IMR-90 (cell line): ENCODE measurements at regions of chr11 and their contacts with region 1.

Region 1: GRCh38 chr11:117226388-117227385 is 5.2 kb downstream of the PCSK7 start:
- DNase-seq: peak; percentile 78
- ATAC-seq: peak; percentile 79
- H3K4me3 ChIP-seq: no peak overlapping the region
- H3K27ac ChIP-seq: no peak overlapping the region
- H3K4me1 ChIP-seq: peaks cover 9% of the 10 kb centered on the region
- H3K27me3 ChIP-seq: no peaks in the 10 kb centered on the region
- CTCF ChIP-seq: peak; percentile 84
- POLR2A ChIP-seq: no peak
- RAD21 ChIP-seq: peak; percentile 87

Region 2: DNA sequence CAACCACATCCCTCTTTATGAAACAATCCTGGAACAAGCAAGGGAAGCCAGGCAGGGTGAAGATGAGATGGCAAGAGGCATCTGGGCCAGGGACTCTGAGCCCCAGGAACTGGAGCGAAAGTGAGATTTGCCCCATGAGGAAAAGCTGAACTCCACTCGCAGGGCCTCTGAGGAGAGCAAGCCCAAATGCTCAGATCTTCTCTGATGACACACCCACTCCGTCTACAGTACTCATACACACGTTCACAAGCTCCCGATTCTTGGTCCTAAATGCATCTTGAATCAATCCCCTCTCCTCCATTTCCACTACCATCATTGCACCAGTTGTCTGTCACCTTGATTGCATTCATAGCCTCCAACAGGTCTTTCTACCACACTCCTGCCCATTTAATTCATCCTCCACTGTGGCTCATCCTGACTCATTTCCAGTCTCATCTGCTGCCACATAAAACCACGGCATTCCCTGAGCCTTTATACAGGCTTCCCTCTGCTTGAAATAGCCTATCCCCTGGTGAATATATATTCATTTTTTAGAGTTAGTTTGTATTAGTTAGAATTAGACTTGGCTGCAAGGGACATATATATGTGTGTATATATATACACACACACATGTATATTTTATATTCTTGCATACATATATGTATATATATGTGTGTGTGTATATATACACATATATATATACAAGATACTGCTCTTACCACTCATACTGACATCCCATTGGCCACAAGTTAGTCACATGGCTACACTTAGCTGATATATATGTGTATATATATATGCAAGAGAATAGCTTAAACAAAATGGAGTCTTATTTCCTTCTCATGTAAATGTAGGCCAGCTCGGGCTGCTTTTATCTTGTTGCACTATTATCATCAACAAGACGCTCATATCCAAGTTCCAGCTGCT is 433.6 kb before region 1 on chr11:
- CTCF ChIA-PET with region 1: interaction called, 3 read pairs
- POLR2A ChIA-PET with region 1: no interaction called
- dilution Hi-C with region 1: no loop called
- in situ Hi-C with region 1: loop called (anchors 5 kb)
- intact Hi-C with region 1: loop called (anchors 1 kb)
- DNase-seq: peak; percentile 73
- ATAC-seq: peak; percentile 21; the same call in 1 of the 2 replicates
- H3K4me3 ChIP-seq: no peak overlapping the region
- H3K27ac ChIP-seq: no peak overlapping the region
- H3K4me1 ChIP-seq: peaks cover 4% of the 10 kb centered on the region
- H3K27me3 ChIP-seq: no peaks in the 10 kb centered on the region
- CTCF ChIP-seq: no peak
- POLR2A ChIP-seq: no peak
- RAD21 ChIP-seq: no peak

Region 3: DNA sequence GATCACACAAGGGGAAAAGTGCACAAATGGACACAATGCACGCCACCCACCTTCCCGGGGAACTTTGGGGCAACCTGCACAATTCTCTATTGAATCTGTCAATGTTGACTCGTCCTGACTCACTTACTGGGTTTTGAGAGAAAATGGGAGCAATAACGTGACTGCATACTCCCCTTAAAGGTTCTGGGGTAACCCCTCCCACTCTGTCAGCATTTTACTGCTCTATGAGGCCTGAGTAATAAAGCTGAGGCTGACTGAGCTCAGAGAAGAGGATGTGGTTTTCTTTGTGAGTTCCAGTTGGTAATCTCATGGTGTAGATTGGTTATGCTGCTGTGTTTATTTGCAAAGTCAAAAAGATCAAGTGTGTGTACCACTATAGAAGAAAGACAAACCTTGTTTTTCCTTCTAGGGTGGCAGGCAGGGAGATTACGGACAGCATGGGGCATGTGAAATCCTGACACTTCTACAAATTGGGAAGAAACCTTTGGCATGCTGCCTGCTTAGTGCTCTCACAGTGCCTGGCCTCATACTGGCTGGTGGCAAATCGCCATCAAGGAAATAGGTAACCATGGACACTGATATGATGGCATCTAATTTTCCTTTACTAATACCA is 373.1 kb before region 1 on chr11:
- CTCF ChIA-PET with region 1: no interaction called
- POLR2A ChIA-PET with region 1: no interaction called
- dilution Hi-C with region 1: no loop called
- in situ Hi-C with region 1: no loop called
- intact Hi-C with region 1: loop called (anchors 10 kb)
- DNase-seq: peak; percentile 96
- ATAC-seq: peak; percentile 87
- H3K4me3 ChIP-seq: no peak overlapping the region
- H3K27ac ChIP-seq: peak overlapping the region; percentile 41
- H3K4me1 ChIP-seq: peaks cover 23% of the 10 kb centered on the region
- H3K27me3 ChIP-seq: no peaks in the 10 kb centered on the region
- CTCF ChIP-seq: no peak
- POLR2A ChIP-seq: no peak
- RAD21 ChIP-seq: no peak

Region 4: GRCh38 chr11:116879800-116880625 is 346.7 kb before region 1 on chr11:
- CTCF ChIA-PET with region 1: no interaction called
- POLR2A ChIA-PET with region 1: no interaction called
- dilution Hi-C with region 1: no loop called
- in situ Hi-C with region 1: loop called (anchors 10 kb)
- intact Hi-C with region 1: no loop called
- DNase-seq: peak; percentile 85
- ATAC-seq: peak; percentile 93
- H3K4me3 ChIP-seq: no peak overlapping the region
- H3K27ac ChIP-seq: no peak overlapping the region
- H3K4me1 ChIP-seq: peaks cover 7% of the 10 kb centered on the region
- H3K27me3 ChIP-seq: no peaks in the 10 kb centered on the region
- CTCF ChIP-seq: peak; percentile 79
- POLR2A ChIP-seq: no peak
- RAD21 ChIP-seq: peak; percentile 89

Region 5: DNA sequence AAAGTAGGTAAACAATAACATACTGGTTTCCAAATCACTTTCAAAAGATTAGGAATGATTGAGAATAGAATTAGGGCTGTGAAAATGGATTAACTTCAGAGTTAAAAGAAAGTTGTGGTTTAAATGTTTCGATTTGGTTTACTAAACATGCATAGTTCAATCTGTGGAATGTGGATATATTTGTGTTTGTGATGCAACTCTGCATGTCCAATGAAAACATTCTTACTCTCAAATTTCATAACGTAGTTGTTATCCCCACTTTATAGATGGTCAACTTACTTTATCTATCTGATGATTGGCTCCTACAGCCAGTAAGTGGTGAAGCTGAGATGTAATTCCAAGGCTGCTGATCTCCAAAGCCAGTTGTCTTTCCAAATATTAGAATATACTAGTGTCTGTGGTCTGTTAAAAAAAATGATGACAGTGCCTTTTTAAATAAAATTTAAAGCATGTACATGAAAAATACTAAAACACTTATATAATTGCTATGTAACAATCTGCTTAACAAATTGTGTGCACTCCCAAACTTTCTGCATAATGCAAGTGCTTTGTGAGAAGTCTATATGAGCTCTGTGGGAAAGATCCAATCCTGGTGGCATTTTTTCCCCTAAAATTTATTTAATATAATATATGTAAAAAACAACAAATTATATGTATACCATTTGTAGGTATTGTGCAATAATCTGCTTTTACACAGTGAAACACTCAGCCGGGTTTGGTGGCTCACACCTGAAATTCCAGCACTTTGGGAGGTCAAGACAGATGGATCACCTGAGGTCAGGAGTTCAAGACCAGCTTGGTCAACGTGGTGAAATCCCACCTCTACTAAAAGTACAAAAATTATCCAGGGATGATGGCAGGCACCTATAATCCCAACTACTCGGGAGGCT is 118.7 kb before region 1 on chr11:
- CTCF ChIA-PET with region 1: no interaction called
- POLR2A ChIA-PET with region 1: no interaction called
- dilution Hi-C with region 1: no loop called
- in situ Hi-C with region 1: no loop called
- intact Hi-C with region 1: loop called (anchors 1 kb)
- DNase-seq: peak; percentile 68
- ATAC-seq: peak; percentile 82
- H3K4me3 ChIP-seq: no peak overlapping the region
- H3K27ac ChIP-seq: no peak overlapping the region
- H3K4me1 ChIP-seq: peaks cover 1% of the 10 kb centered on the region; the same call in 1 of the 2 replicates
- H3K27me3 ChIP-seq: no peaks in the 10 kb centered on the region
- CTCF ChIP-seq: no peak
- POLR2A ChIP-seq: no peak
- RAD21 ChIP-seq: no peak

Region 6: GRCh38 chr11:117178210-117179034 is 48.3 kb before region 1 on chr11 and contains the start of gene SIDT2:
- CTCF ChIA-PET with region 1: interaction called, 4 read pairs
- POLR2A ChIA-PET with region 1: interaction called, 9 read pairs
- dilution Hi-C with region 1: no loop called
- in situ Hi-C with region 1: no loop called
- intact Hi-C with region 1: loop called (anchors 1 kb)
- DNase-seq: peak; percentile 92
- ATAC-seq: peak; percentile 92
- H3K4me3 ChIP-seq: peak within 1 kb of the TSS; percentile 87
- H3K27ac ChIP-seq: peak within 1 kb of the TSS; percentile 93
- H3K4me1 ChIP-seq: peaks cover 13% of the 10 kb centered on the region
- H3K27me3 ChIP-seq: no peaks in the 10 kb centered on the region
- CTCF ChIP-seq: no peak
- POLR2A ChIP-seq: peak; percentile 83
- RAD21 ChIP-seq: no peak
- total RNA-seq, gene SIDT2: 6.7 and 7.3 TPM in 2 replicates

Region 7: DNA sequence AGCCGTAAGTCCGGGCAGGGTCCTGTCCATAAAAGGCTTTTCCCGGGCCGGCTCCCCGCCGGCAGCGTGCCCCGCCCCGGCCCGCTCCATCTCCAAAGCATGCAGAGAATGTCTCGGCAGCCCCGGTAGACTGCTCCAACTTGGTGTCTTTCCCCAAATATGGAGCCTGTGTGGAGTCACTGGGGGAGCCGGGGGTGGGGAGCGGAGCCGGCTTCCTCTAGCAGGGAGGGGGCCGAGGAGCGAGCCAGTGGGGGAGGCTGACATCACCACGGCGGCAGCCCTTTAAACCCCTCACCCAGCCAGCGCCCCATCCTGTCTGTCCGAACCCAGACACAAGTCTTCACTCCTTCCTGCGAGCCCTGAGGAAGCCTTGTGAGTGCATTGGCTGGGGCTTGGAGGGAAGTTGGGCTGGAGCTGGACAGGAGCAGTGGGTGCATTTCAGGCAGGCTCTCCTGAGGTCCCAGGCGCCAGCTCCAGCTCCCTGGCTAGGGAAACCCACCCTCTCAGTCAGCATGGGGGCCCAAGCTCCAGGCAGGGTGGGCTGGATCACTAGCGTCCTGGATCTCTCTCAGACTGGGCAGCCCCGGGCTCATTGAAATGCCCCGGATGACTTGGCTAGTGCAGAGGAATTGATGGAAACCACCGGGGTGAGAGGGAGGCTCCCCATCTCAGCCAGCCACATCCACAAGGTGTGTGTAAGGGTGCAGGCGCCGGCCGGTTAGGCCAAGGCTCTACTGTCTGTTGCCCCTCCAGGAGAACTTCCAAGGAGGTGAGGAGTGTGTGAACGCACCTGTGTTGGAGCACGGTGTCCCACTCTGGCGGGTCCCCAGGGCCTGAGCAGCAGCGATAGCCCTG is 27.4 kb before region 1 on chr11 and contains the start of gene TAGLN:
- CTCF ChIA-PET with region 1: interaction called, 4 read pairs
- POLR2A ChIA-PET with region 1: interaction called, 6 read pairs
- dilution Hi-C with region 1: no loop called
- in situ Hi-C with region 1: no loop called
- intact Hi-C with region 1: loop called (anchors 2 kb)
- DNase-seq: peak; percentile 94
- ATAC-seq: peak; percentile 75
- H3K4me3 ChIP-seq: peak within 1 kb of the TSS; percentile 49
- H3K27ac ChIP-seq: peak within 1 kb of the TSS; percentile 98
- H3K4me1 ChIP-seq: peaks cover 40% of the 10 kb centered on the region
- H3K27me3 ChIP-seq: no peaks in the 10 kb centered on the region
- CTCF ChIP-seq: no peak
- POLR2A ChIP-seq: peak; percentile 98
- RAD21 ChIP-seq: 0 out of 2 replicates have a peak, but pooled peaks have one; percentile 2
- total RNA-seq, gene TAGLN: 1,558 and 2,558 TPM in 2 replicates